ENCODE measurements at regions of chr6 and their contacts with region 1.

Region 1: DNA sequence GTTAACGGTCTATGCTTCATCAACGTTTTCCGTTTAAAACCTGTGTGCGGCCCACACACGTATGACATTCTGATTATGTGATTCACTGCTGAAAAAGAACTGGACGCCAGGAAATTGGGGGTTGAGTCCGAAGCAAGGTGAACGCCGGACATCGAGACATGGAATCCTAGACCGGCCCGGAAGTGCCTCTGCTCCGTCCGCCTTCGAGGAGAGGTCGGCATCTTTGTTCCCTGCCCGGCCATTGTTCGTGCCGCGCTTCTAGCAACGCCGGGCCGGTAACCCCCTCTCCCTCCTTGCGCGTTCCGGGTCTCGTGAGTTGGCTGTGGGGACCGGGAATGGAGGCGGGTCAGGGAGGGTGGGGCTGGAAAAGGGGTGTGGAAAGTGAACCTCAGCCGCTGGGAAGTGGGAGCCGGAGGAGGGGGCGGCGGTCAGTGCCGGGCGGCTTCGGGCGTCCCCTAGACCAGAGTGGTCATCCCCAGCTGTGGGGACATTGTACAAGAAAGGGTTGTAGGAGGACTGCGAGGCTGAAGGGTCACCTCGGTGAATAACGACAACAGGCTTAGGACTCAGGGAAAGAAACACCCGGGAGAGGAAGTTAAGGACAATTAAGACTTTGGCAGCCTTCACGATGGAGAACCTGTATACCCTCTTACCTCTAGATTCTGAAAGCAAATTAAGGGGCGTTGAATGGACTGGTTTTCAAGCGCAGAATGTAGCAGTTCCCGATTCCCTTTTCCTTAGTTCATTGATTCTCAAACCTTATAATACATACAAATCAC is at the start of gene ZSCAN9:
- DNase-seq: peak; percentile 88 to 92
- H3K4me3 ChIP-seq: peak within 1 kb of the TSS; percentile 69 to 72
- H3K27ac ChIP-seq: peak within 1 kb of the TSS; percentile 78 to 80
- H3K4me1 ChIP-seq: peaks cover 0 to 11% (median 7%) of the 10 kb centered on the region in 4 donors
- H3K27me3 ChIP-seq: peaks cover 0 to 3% of the 10 kb centered on the region in 2 donors
- CTCF ChIP-seq: no peak

Region 2: DNA sequence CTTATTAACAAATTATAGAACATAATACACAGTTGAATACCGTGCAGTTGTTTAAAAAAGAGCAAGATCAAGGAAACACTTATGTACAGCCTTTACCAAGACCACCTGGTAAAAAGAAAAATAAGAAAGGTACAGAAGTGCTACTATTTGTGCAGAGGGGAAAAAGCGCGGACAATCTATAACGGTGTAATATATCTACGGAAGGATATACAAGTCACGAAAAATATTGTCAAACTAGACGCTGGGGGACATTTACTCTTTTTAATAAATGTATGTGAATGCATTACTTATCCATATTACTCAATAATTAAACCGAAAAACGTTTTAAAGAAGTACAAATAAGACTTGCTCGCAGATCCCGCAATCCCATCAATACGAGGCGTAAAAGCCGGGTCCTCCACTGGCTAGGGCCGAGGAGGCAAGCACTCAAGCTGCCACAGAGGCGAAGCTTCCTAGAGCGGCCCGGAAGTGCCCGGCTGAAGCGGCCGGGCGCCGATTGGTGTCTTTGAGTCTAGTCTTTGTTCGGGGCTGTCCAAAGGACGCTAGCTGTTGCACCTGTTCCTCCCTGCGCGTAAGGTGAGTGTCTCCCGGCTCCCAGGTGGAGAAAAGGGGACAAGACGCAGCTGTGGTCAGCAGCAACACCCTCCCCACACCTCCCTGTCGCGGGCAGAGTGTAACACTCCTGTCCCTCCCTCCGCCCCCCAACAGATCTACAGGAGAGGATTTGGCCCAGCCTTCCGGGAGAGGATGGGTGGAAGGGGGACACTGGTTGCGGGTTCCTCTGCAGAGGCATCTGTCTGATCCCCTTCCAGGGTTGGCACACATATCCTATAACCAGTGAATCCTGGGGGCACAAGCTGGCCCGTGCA is 100.9 kb before region 1 on chr6 and contains the start of gene ZSCAN16:
- intact Hi-C with region 1: loop called (anchors 10 kb)
- DNase-seq: peak; percentile 80 to 86
- H3K4me3 ChIP-seq: peak within 1 kb of the TSS; percentile 63 to 74
- H3K27ac ChIP-seq: peak within 1 kb of the TSS; percentile 55 to 76
- H3K4me1 ChIP-seq: peaks cover 0 to 14% (median 4%) of the 10 kb centered on the region in 4 donors
- H3K27me3 ChIP-seq: no peaks in the 10 kb centered on the region
- CTCF ChIP-seq: no peak

Region 3: DNA sequence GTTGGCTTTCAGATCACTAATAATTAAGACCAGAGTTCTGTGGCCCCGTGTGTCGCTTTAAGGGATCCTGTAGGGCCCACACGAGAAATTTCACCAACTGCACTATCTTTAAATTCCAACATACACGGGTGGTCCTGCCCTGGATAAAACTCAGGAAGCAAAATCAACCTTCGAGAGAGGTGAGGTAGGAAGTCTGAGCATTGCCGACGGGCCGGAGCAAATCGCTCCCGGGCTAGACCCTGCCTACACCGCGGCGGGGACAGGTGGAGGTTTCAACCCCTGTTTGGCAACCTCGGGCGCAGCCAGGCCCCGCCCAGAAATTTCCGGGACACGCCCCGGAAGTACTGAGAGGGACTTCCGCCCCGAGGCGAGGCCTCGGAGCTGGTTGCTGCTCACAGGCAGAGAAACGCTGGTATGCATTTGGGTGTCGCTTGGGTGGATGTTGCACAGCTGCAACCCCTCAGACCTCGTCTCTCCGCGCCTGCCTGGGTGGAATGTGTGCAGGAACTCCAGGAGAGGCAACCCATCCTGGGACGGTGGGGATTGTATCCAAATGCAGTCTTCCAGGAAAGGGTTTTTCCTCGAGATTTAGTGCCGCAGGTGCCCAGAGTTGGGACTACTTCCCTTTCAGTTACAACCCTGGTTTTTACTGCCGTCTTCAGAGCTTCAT is 63.7 kb before region 1 on chr6:
- intact Hi-C with region 1: no loop called
- DNase-seq: peak; percentile 40 to 80
- H3K4me3 ChIP-seq: peak overlapping the region; percentile 49 to 51
- H3K27ac ChIP-seq: peak overlapping the region in 1 of 2 donors; percentile 38
- H3K4me1 ChIP-seq: peaks cover 0 to 17% (median 7%) of the 10 kb centered on the region in 4 donors
- H3K27me3 ChIP-seq: no peaks in the 10 kb centered on the region
- CTCF ChIP-seq: no peak

Region 4: DNA sequence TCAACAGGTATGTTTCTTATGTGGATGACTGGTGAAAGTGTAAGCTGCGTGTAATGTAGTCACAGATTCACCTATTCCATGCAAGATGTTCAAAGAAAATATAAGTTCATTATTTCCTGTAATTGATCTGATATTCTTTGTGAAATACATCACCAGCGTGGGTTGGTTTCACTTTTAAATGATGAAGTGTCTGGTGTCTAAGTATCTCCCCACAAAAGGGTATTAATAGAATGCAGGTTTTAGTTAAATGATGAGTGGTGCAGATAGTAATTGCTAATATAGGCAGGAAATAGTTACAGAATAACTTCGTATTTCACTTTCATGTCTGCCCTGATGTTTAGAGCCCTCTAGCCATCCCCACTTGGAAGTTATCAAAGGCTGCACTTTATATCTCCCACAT is 78.3 kb after region 1 on chr6:
- intact Hi-C with region 1: no loop called
- DNase-seq: no peak
- H3K4me3 ChIP-seq: no peak overlapping the region
- H3K27ac ChIP-seq: no peak overlapping the region
- H3K4me1 ChIP-seq: no peaks in the 10 kb centered on the region
- H3K27me3 ChIP-seq: no peaks in the 10 kb centered on the region
- CTCF ChIP-seq: no peak

Region 5: DNA sequence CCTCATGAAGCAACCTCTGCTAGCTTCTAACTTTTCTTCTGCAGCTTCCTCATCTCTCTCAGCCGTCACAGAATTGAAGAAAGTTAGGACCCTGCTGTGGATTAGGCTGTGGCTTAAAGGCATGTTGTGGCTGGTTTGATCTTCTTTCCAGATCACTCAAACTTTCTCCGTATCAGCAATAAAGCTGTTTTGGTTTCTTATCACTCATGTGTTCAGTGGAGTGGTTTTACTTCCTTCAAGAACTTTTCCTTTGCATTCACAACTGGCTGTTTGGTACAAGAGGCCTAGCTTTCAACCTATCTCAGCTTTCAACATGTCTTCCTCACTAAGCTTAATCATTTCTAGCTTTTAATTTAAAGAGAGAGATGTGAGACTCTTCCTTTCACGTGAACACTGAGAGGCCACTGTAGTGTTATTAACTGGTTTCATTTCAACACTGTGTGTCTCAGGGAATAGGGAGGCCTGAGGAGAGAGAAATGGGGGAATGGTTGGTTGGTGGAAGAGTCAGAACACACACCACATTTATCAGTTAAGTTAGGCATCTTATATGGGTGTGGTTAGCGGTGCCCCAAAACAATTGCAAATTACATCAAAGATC is 200.8 kb after region 1 on chr6:
- intact Hi-C with region 1: no loop called
- DNase-seq: no peak
- H3K4me3 ChIP-seq: no peak overlapping the region
- H3K27ac ChIP-seq: no peak overlapping the region
- H3K4me1 ChIP-seq: no peaks in the 10 kb centered on the region
- H3K27me3 ChIP-seq: no peaks in the 10 kb centered on the region
- CTCF ChIP-seq: no peak

Measured in tibial artery (tissue), 4 donors.